Esophagus squamous epithelium (tissue), 5 donors: ENCODE measurements at regions of chr14 and their contacts with region 1.

Region 1: GRCh38 chr14:50859296-50859624 is 12.6 kb upstream of the ABHD12B start:
- DNase-seq: no peak
- H3K4me3 ChIP-seq: peak overlapping the region in 3 of 4 donors; percentile 50 to 74 (median 52)
- H3K27ac ChIP-seq: peak overlapping the region in 3 of 4 donors; percentile 44 to 84 (median 71)
- H3K4me1 ChIP-seq: peaks cover 0 to 16% (median 6%) of the 10 kb centered on the region in 3 donors
- H3K27me3 ChIP-seq: no peaks in the 10 kb centered on the region
- CTCF ChIP-seq: no peak
- POLR2A ChIP-seq: no peak

Region 2: DNA sequence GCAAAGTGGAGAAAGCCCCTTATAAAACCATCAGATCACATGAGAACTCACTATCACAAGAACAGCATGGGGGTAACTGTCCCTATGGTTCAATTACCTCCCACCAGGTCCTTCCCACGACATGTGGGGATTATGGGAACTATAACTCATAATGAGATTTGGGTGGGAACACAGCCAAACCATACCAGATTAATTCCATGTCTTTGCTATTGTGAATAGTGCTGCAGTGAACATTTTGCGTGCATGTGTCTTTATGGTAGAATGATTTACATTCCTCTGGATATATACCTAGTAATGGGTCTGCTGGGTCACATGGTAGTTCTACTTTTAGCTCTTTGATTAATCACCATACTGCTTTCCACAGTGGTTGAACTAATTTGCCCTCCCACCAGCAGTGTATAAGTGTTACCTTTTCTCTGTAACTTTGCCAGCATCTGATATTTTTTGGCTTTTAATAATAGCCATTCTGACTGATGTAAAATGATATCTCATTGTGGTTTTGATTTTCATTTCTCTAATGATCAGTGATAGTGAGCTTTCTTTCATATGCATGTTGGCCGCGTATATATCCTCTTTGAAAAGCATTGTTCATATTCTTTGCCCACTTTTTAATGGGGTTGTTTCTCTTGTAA is 161.5 kb before region 1 on chr14:
- intact Hi-C with region 1: no loop called
- DNase-seq: no peak
- H3K4me3 ChIP-seq: no peak overlapping the region
- H3K27ac ChIP-seq: no peak overlapping the region
- H3K4me1 ChIP-seq: no peaks in the 10 kb centered on the region
- H3K27me3 ChIP-seq: peaks cover 0 to 9% (median 0%) of the 10 kb centered on the region in 4 donors
- CTCF ChIP-seq: no peak
- POLR2A ChIP-seq: no peak

Region 3: GRCh38 chr14:50785457-50786063 is 73.7 kb before region 1 on chr14:
- intact Hi-C with region 1: loop called (anchors 10 kb)
- DNase-seq: no peak
- H3K4me3 ChIP-seq: no peak overlapping the region
- H3K27ac ChIP-seq: no peak overlapping the region
- H3K4me1 ChIP-seq: peaks cover 0 to 4% (median 0%) of the 10 kb centered on the region in 3 donors
- H3K27me3 ChIP-seq: no peaks in the 10 kb centered on the region
- CTCF ChIP-seq: no peak
- POLR2A ChIP-seq: no peak

Region 4: GRCh38 chr14:50813544-50813863 is 45.8 kb before region 1 on chr14:
- intact Hi-C with region 1: no loop called
- DNase-seq: no peak
- H3K4me3 ChIP-seq: peak overlapping the region in 1 of 4 donors; percentile 10
- H3K27ac ChIP-seq: no peak overlapping the region
- H3K4me1 ChIP-seq: peaks cover 0 to 13% (median 0%) of the 10 kb centered on the region in 3 donors
- H3K27me3 ChIP-seq: no peaks in the 10 kb centered on the region
- CTCF ChIP-seq: no peak
- POLR2A ChIP-seq: no peak

Region 5: GRCh38 chr14:51035611-51036213 is 176.5 kb after region 1 on chr14:
- intact Hi-C with region 1: no loop called
- DNase-seq: no peak
- H3K4me3 ChIP-seq: no peak overlapping the region
- H3K27ac ChIP-seq: no peak overlapping the region
- H3K4me1 ChIP-seq: no peaks in the 10 kb centered on the region
- H3K27me3 ChIP-seq: peaks cover 0 to 6% (median 0%) of the 10 kb centered on the region in 4 donors
- CTCF ChIP-seq: no peak
- POLR2A ChIP-seq: no peak